SK-N-SH (cell line): ENCODE measurements at regions of chr17 and their contacts with region 1.

Region 1: GRCh38 chr17:57535249-57535966 is 209.7 kb downstream of the CCDC182 start:
- DNase-seq: peak; percentile 71
- H3K4me3 ChIP-seq: no peak overlapping the region
- H3K27ac ChIP-seq: peak overlapping the region in 1 of 2 experiments; percentile 100; a peak in 2 of 4 replicates
- H3K4me1 ChIP-seq: peaks cover 34 to 96% of the 10 kb centered on the region in 2 experiments
- H3K27me3 ChIP-seq: no peaks in the 10 kb centered on the region
- CTCF ChIP-seq: no peak
- EP300 ChIP-seq: peak in 1 of 2 experiments; percentile 88; a peak in 2 of 4 replicates
- RAD21 ChIP-seq: 0 out of 2 replicates have a peak, but pooled peaks have one; percentile 23

Region 2: DNA sequence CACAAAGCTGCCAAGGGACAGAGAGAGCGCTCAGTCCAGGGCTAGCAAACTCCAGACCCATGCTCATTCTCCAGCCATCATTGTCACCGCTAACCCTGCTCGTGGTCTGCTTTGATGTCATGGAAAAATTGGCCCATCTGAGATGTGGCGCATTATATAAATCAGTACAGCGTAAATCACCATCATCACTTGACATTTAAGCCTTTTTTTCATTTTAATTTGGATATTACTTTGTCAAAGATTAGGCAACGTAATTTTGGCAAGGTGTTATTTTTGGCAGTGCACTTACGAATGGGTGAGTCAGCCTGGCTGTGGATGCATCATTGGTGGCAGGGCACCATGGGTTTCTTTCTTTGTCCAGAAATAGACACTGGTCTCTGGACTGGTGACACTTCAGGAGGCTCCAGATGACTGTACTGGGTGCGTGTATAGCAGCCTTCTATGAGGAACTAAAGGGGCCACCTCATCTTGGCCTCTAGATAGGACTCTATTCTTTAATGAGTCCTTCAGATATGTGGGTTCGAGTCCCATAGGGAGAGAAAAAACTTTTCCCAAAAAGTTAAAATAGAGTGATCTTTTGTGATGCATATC is 112.7 kb before region 1 on chr17:
- CTCF ChIA-PET with region 1: interaction called, 3 read pairs
- POLR2A ChIA-PET with region 1: interaction called, 12 read pairs
- DNase-seq: no peak
- H3K4me3 ChIP-seq: no peak overlapping the region
- H3K27ac ChIP-seq: peak overlapping the region; percentile 11 to 84
- H3K4me1 ChIP-seq: peaks cover 37 to 74% of the 10 kb centered on the region in 2 experiments
- H3K27me3 ChIP-seq: no peaks in the 10 kb centered on the region
- CTCF ChIP-seq: no peak
- EP300 ChIP-seq: no peak
- RAD21 ChIP-seq: no peak

Region 3: GRCh38 chr17:57505841-57506773 is 29.3 kb before region 1 on chr17:
- CTCF ChIA-PET with region 1: interaction called, 12 read pairs
- POLR2A ChIA-PET with region 1: interaction called, 12 read pairs
- DNase-seq: peak; percentile 75
- H3K4me3 ChIP-seq: no peak overlapping the region
- H3K27ac ChIP-seq: peak overlapping the region; percentile 36 to 99; a peak in 3 of 4 replicates
- H3K4me1 ChIP-seq: peaks cover 21 to 78% of the 10 kb centered on the region in 2 experiments
- H3K27me3 ChIP-seq: no peaks in the 10 kb centered on the region
- CTCF ChIP-seq: no peak
- EP300 ChIP-seq: peak in 1 of 2 experiments; percentile 46; a peak in 1 of 4 replicates
- RAD21 ChIP-seq: peak; percentile 35

Region 4: DNA sequence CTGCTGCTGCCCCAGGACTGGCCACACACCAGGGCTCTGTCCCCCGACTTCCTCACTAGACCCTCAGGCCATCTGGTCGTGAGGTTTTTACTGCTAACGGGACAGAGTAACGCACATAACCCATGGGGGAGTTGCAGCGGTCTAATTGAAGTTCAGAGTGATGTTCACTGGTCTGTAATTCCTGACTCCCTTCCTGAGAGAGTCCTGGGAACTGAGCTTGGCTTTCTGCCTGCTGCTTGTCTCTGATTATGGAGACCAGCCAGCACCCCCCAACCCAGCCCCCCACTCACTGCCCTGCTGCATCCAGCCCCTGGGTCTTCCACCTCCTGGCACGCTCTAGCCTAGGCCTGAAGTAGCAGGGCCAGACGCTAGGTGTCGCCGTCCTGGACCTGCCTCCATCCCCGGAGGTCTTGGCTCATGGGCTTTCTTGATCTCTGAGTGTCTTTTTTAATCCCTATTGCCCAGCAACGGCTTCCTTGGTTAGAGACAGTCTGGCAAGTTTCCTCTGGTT is 16.8 kb after region 1 on chr17:
- CTCF ChIA-PET with region 1: interaction called, 23 read pairs
- POLR2A ChIA-PET with region 1: interaction called, 13 read pairs
- DNase-seq: peak; percentile 84
- H3K4me3 ChIP-seq: no peak overlapping the region
- H3K27ac ChIP-seq: peak overlapping the region in 1 of 2 experiments; percentile 99; a peak in 2 of 4 replicates
- H3K4me1 ChIP-seq: peaks cover 6 to 86% of the 10 kb centered on the region in 2 experiments; a peak in 2 of 4 replicates
- H3K27me3 ChIP-seq: no peaks in the 10 kb centered on the region
- CTCF ChIP-seq: peak; percentile 52
- EP300 ChIP-seq: peak in 1 of 2 experiments; percentile 61; a peak in 1 of 4 replicates
- RAD21 ChIP-seq: peak; percentile 65

Region 5: GRCh38 chr17:57570724-57571344 is 35.4 kb after region 1 on chr17:
- CTCF ChIA-PET with region 1: interaction called, 20 read pairs
- POLR2A ChIA-PET with region 1: interaction called, 4 read pairs
- DNase-seq: no peak
- H3K4me3 ChIP-seq: no peak overlapping the region
- H3K27ac ChIP-seq: peak overlapping the region in 1 of 2 experiments; percentile 100; a peak in 2 of 4 replicates
- H3K4me1 ChIP-seq: peaks cover 0 to 87% of the 10 kb centered on the region in 2 experiments; a peak in 2 of 4 replicates
- H3K27me3 ChIP-seq: no peaks in the 10 kb centered on the region
- CTCF ChIP-seq: no peak
- EP300 ChIP-seq: peak in 1 of 2 experiments; percentile 41; a peak in 1 of 4 replicates
- RAD21 ChIP-seq: peak; percentile 5; the same call in 1 of the 2 replicates

Region 6: DNA sequence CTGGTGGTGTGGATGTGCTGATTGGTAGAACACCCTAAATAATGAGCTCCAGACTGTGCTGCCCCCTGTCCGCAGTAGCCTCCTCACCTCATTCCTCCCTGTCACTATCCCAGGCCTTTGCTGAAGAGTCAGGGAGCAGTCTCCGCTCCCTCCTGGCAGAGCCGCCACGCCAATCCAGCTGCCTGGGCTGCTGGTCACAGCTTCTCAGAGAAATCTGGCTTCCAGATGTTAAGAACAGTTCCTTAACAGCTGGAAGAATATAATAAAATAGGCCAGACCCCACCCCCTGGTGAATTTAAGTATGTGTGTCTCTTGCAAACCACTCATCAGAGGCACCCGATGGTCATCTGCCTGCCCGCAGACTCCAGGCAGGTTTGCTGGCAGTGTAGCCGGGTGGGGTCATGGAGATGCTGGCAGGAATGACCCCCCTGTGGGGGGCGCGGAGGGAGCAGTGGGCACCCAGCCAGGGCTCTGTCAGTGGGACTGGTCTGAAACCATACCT is 48.7 kb after region 1 on chr17:
- CTCF ChIA-PET with region 1: interaction called, 3 read pairs
- POLR2A ChIA-PET with region 1: interaction called, 51 read pairs
- DNase-seq: peak; percentile 83
- H3K4me3 ChIP-seq: no peak overlapping the region
- H3K27ac ChIP-seq: peak overlapping the region in 1 of 2 experiments; percentile 100; a peak in 2 of 4 replicates
- H3K4me1 ChIP-seq: peaks cover 13 to 89% of the 10 kb centered on the region in 2 experiments; a peak in 3 of 4 replicates
- H3K27me3 ChIP-seq: no peaks in the 10 kb centered on the region
- CTCF ChIP-seq: no peak
- EP300 ChIP-seq: peak in 1 of 2 experiments; percentile 86; a peak in 1 of 4 replicates
- RAD21 ChIP-seq: peak; percentile 47; the same call in 1 of the 2 replicates

Region 7: DNA sequence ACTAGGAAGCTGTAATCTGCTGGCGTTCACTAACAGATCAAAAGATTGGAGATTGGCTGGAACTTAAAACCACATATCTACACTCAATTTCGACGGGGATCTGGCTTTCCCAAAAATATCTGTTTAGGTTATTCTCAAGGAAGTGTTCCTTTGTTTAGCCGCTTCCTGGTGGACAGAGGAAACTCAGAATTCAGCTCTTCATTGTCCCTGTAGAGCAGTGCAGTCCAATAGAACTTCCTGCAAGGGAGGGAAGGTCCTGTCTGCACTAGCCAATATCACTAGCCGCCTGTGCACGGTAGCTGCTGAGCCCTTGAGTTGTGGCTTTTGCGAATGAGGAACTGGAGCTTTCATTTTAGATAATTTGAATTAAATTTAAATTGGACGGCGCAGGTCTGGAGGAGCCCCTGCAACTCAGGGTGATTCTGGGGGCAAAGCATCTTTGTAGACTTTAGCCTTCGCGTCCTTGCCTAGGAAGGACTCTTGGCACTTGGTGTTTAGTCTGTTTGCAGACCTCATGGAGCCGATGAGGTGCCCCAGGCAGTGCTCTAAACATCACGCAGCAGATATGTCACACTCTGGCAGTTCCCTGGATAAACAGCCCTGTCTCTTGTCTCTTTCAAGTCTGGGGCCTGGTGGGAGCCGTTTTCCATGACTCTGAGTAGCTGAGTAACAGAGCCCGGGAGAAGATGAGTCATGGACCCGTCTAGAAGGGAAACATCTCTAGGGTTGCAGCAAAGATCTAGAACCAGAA is 87.5 kb after region 1 on chr17:
- CTCF ChIA-PET with region 1: no interaction called
- POLR2A ChIA-PET with region 1: interaction called, 18 read pairs
- DNase-seq: peak; percentile 82
- H3K4me3 ChIP-seq: no peak overlapping the region
- H3K27ac ChIP-seq: peak overlapping the region; percentile 87 to 100
- H3K4me1 ChIP-seq: peaks cover 53 to 84% of the 10 kb centered on the region in 2 experiments
- H3K27me3 ChIP-seq: no peaks in the 10 kb centered on the region
- CTCF ChIP-seq: no peak
- EP300 ChIP-seq: peak; percentile 71 to 97; a peak in 3 of 4 replicates
- RAD21 ChIP-seq: peak; percentile 46